Activated B cell treated with CpG ODN at 0.5 μM for 24 hours (primary cell): ENCODE measurements at regions of chr2 and their contacts with region 1.

Region 1: DNA sequence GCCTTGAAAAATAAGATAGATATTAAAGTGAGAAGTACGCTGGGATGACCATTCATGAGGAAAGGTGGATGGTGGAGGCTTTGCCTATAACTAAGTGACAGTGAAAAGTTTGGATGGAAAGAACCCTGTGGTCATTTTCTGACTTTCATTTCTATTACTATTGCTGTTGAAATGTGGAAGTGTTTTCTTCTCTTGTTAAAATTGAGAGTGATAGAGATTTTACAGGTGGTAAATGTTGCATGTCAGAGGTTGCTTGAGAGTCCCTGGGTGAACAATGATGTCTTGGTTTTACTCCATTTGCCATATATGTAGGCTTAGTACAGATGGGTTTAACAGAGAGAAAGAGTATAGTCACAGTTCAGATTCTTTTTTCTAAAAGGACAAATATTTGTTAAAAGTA is 18.4 kb downstream of the NCOA1 start:
- DNase-seq: no peak
- ATAC-seq: peak; percentile 93
- H3K4me3 Mint-ChIP-seq: peak overlapping the region; percentile 52
- H3K27ac Mint-ChIP-seq: peak overlapping the region; percentile 83
- H3K4me1 Mint-ChIP-seq: peaks cover 68% of the 10 kb centered on the region
- H3K27me3 Mint-ChIP-seq: no peaks in the 10 kb centered on the region
- CTCF ChIP-seq: no peak

Region 2: DNA sequence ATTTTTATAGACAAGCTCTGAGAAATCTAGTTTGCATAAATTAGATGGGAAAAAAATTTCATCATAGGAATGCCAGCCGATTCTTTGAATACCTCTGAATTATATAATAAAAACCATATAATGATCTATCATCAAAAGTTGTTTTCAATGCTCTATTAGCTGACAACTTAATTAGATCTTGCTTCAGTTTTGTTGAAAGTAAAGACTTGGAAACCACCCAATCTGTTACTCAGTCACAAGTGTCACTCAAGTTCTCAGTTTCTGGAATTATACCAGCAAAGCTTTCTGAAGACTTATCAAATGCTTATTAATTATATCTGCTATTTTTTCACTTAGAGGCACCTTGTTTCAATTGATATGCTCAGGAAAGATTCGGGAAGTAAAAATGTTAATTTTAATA is 407.4 kb before region 1 on chr2:
- CTCF ChIA-PET with region 1: no interaction called
- POLR2A ChIA-PET with region 1: no interaction called
- intact Hi-C with region 1: no loop called
- DNase-seq: no peak
- ATAC-seq: no peak
- H3K4me3 Mint-ChIP-seq: no peak overlapping the region
- H3K27ac Mint-ChIP-seq: no peak overlapping the region
- H3K4me1 Mint-ChIP-seq: peaks cover 26% of the 10 kb centered on the region
- H3K27me3 Mint-ChIP-seq: no peaks in the 10 kb centered on the region
- CTCF ChIP-seq: no peak

Region 3: GRCh38 chr2:24543252-24543651 is 33.8 kb after region 1 on chr2:
- CTCF ChIA-PET with region 1: no interaction called
- POLR2A ChIA-PET with region 1: no interaction called
- intact Hi-C with region 1: loop called (anchors 2 kb)
- DNase-seq: no peak
- ATAC-seq: no peak
- H3K4me3 Mint-ChIP-seq: no peak overlapping the region
- H3K27ac Mint-ChIP-seq: no peak overlapping the region
- H3K4me1 Mint-ChIP-seq: peaks cover 21% of the 10 kb centered on the region
- H3K27me3 Mint-ChIP-seq: no peaks in the 10 kb centered on the region
- CTCF ChIP-seq: no peak